ENCODE measurements at regions of chr2 and their contacts with region 1.

Region 1: GRCh38 chr2:30310955-30311354 is 79.6 kb downstream of the LBH start:
- DNase-seq: no peak
- H3K4me3 Mint-ChIP-seq: no peak overlapping the region
- H3K27ac Mint-ChIP-seq: no peak overlapping the region
- H3K4me1 Mint-ChIP-seq: peaks cover 27% of the 10 kb centered on the region
- H3K27me3 Mint-ChIP-seq: no peaks in the 10 kb centered on the region

Region 2: DNA sequence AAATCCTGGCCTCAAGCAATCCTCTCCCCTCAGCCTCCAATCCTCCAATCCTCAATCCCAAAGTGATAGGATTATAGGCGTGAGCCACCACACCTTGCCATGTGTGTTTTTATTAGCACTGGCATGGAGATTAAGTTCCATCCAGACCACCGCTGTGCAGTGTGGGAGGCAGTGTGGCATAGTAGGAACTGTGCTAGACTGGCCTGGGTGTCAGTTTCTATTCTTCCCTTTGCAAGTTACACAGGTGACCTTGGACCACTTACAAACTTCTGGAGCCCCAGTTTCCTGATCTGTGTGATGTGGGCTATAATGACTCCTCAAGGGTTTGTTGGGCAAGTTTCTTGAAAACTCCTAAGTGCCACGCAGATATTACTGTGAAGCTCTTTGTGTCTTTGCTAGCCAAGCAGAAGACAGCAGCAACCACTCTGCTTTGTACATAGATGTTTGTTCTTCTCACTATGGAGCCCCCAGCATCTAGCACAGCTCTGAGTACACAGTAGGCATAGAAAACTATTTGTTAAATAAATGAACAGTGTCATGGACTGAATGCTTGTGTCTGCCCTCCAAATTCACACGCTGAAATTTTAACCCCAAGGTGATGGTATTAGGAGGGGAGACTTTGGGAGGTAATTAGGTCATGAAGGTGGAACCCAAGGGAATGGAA is 13.4 kb after region 1 on chr2:
- CTCF ChIA-PET with region 1: interaction called, 10 read pairs
- POLR2A ChIA-PET with region 1: no interaction called
- DNase-seq: no peak
- H3K4me3 Mint-ChIP-seq: no peak overlapping the region
- H3K27ac Mint-ChIP-seq: no peak overlapping the region
- H3K4me1 Mint-ChIP-seq: peaks cover 15% of the 10 kb centered on the region
- H3K27me3 Mint-ChIP-seq: no peaks in the 10 kb centered on the region

Measured in activated CD4-positive, alpha-beta T cell treated with anti-CD3 and anti-CD28 coated beads, Interleukin-2, amount 10 ng/mL, durations not matched to agents 7 days and 5 days (primary cell).